HCT116 (cell line): ENCODE measurements at regions of chr1 and their contacts with region 1.

Region 1: GRCh38 chr1:8077120-8077573 is 51.0 kb upstream of the ERRFI1 start:
- DNase-seq: peak; percentile 88
- ATAC-seq: peak; percentile 78
- H3K4me3 ChIP-seq: peak overlapping the region in 1 of 2 experiments; percentile 48; a peak in 2 of 4 replicates
- H3K27ac ChIP-seq: peak overlapping the region; percentile 92
- H3K4me1 ChIP-seq: peaks cover 92 to 99% of the 10 kb centered on the region in 2 experiments
- H3K27me3 ChIP-seq: no peaks in the 10 kb centered on the region
- CTCF ChIP-seq: no peak
- POLR2A ChIP-seq: peak; percentile 37
- RAD21 ChIP-seq: no peak

Region 2: DNA sequence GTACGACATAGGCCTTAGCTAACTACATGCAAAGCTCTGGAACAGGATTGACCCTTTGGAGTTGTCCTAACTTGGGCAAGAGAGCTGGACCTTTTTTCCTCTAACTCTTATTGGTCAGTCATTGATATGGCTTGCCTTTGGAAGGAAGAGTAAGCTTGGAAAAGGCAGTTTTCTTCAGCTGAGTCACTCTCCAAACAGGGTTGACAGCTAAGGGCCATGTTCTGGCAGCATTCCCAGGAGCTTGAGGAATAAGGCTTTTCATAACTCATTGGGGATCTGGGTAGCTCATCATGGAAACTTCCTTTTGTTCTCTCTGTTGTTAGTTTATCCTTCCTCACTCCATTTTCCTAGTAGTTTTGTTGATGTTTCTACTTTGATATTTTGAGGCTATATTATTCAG is 36.6 kb before region 1 on chr1:
- CTCF ChIA-PET with region 1: interaction called, 3 read pairs
- POLR2A ChIA-PET with region 1: interaction called, 28 read pairs
- RAD21 ChIA-PET with region 1: interaction called, 5 to 9 read pairs
- intact Hi-C with region 1: no loop called
- DNase-seq: peak; percentile 99
- ATAC-seq: peak; percentile 81
- H3K4me3 ChIP-seq: no peak overlapping the region
- H3K27ac ChIP-seq: peak overlapping the region; percentile 96
- H3K4me1 ChIP-seq: peaks cover 79 to 89% of the 10 kb centered on the region in 2 experiments
- H3K27me3 ChIP-seq: no peaks in the 10 kb centered on the region
- CTCF ChIP-seq: no peak
- POLR2A ChIP-seq: no peak
- RAD21 ChIP-seq: peak; percentile 45

Region 3: DNA sequence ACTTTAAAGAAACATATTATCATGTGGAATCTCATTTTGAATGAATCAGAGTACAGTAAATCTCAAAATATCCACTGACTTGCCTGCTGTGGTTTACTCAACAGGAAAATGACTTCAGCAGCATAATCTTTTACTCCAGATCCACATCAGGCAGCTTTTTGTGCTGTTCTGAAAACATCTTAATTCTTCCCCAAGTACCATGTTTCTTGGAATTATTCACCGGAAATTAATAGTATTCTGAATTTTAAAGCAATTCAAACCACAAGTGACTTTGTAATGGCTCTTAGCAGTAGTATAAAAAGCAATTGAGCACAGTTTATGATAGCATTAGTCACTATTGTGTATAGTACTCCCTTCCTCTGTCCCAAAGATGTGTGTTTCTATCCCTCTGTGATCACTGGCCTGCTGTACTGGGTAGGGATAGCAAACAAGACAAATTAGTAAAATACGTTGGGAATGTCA is 13.1 kb after region 1 on chr1:
- CTCF ChIA-PET with region 1: interaction called, 3 read pairs
- POLR2A ChIA-PET with region 1: interaction called, 40 read pairs
- RAD21 ChIA-PET with region 1: no interaction called
- intact Hi-C with region 1: no loop called
- DNase-seq: no peak
- ATAC-seq: peak; percentile 59
- H3K4me3 ChIP-seq: no peak overlapping the region
- H3K27ac ChIP-seq: peak overlapping the region; percentile 97
- H3K4me1 ChIP-seq: peaks cover 96 to 100% of the 10 kb centered on the region in 2 experiments
- H3K27me3 ChIP-seq: no peaks in the 10 kb centered on the region
- CTCF ChIP-seq: no peak
- POLR2A ChIP-seq: no peak
- RAD21 ChIP-seq: no peak

Region 4: DNA sequence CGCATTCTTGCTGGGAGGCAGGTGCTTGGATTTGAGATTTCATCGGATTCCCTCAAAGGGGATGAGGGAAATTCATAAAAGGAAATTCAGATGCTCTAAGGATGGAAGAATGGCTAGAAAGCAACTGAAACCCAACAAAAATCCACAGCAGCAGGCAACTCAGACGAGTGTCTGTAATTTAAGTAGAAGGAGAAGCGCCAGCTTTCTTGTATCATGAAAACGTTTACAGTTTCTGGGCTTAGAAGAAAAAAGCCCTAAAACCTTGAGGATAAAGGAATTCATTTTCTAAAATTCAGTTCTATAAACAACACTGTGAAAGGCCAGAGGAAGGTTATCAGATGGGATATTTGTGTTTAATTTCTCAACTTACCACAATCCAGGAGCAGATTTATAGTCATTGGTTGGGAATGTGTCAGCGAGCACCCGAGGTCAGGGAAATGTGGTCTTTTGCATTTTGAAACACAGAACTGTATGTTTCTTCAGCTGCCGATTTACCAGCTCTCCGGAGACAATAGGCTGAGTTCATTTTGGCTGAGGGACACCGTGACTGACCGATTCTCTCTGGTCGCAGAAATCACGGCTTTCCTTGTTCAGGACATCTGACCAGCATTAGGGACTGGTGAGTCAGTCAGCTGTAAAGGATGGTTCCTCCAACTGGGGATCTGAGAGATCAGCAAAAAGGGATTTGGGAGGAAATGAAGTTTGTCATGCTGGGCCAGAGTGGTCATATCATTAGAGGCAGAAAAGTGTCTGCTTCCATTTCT is 60.5 kb after region 1 on chr1:
- CTCF ChIA-PET with region 1: no interaction called
- POLR2A ChIA-PET with region 1: interaction called, 11 read pairs
- RAD21 ChIA-PET with region 1: no interaction called
- intact Hi-C with region 1: no loop called
- DNase-seq: peak; percentile 58
- ATAC-seq: peak; percentile 51
- H3K4me3 ChIP-seq: peak overlapping the region; percentile 10 to 40
- H3K27ac ChIP-seq: peak overlapping the region; percentile 97
- H3K4me1 ChIP-seq: peaks cover 78 to 85% of the 10 kb centered on the region in 2 experiments
- H3K27me3 ChIP-seq: no peaks in the 10 kb centered on the region
- CTCF ChIP-seq: no peak
- POLR2A ChIP-seq: no peak
- RAD21 ChIP-seq: peak; percentile 17; the same call in 1 of the 2 replicates

Region 5: GRCh38 chr1:8189931-8190483 is 112.9 kb after region 1 on chr1:
- CTCF ChIA-PET with region 1: no interaction called
- POLR2A ChIA-PET with region 1: interaction called, 39 read pairs
- RAD21 ChIA-PET with region 1: interaction called in 1 of 2 experiments, 3 read pairs
- intact Hi-C with region 1: no loop called
- DNase-seq: peak; percentile 91
- ATAC-seq: peak; percentile 74
- H3K4me3 ChIP-seq: no peak overlapping the region
- H3K27ac ChIP-seq: peak overlapping the region; percentile 91
- H3K4me1 ChIP-seq: peaks cover 78 to 87% of the 10 kb centered on the region in 2 experiments
- H3K27me3 ChIP-seq: no peaks in the 10 kb centered on the region
- CTCF ChIP-seq: no peak
- POLR2A ChIP-seq: no peak
- RAD21 ChIP-seq: no peak